Aorta (tissue), 5 donors: ENCODE measurements at regions of chr3 and their contacts with region 1.

Region 1: GRCh38 chr3:124928333-124929202 is 6.0 kb downstream of the MUC13 start:
- DNase-seq: peak in 1 of 2 donors; percentile 76
- ATAC-seq: no peak
- H3K4me3 ChIP-seq: no peak overlapping the region
- H3K27ac ChIP-seq: no peak overlapping the region
- H3K4me1 ChIP-seq: no peaks in the 10 kb centered on the region
- H3K27me3 ChIP-seq: no peaks in the 10 kb centered on the region

Region 2: GRCh38 chr3:124315215-124316033 is 613.1 kb before region 1 on chr3:
- intact Hi-C with region 1: no loop called
- DNase-seq: peak in 1 of 2 donors; percentile 73
- ATAC-seq: peak; percentile 77
- H3K4me3 ChIP-seq: no peak overlapping the region
- H3K27ac ChIP-seq: peak overlapping the region in 1 of 2 donors; percentile 52
- H3K4me1 ChIP-seq: peaks cover 3% of the 10 kb centered on the region in 2 donors
- H3K27me3 ChIP-seq: no peaks in the 10 kb centered on the region

Region 3: GRCh38 chr3:125163739-125164601 is 235.4 kb after region 1 on chr3:
- intact Hi-C with region 1: loop called in 1 of 2 experiments (anchors 5 kb)
- DNase-seq: no peak
- ATAC-seq: peak; percentile 51
- H3K4me3 ChIP-seq: no peak overlapping the region
- H3K27ac ChIP-seq: no peak overlapping the region
- H3K4me1 ChIP-seq: no peaks in the 10 kb centered on the region
- H3K27me3 ChIP-seq: no peaks in the 10 kb centered on the region

Region 4: DNA sequence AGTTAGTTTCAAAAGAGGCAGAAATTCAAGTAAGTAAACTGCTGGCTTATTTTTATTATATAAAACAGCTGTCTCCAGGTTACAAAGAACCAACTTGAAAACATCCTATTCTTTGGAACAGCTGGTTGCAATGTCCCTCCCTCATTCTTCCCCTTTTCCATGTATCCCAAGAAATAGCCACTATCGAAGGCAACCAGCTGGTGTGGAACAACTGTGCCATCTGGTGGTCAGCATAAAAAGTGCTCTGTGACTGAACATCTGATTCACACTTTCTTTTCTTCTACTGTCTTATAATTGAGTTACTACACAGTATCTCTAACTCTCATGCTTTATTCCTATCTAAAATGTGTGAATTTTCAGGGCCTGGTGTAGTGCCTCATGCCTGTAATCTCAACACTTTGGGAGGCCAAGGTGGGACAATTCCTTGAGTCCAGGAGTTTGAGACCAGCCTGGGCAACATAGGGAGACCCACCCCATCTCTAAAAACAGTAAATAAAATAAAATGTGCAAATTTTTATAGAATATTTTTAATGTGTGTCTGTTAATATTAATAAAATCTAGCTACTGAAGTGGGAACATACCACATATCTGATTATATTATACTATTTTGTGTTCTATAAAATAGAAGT is 657.1 kb after region 1 on chr3:
- intact Hi-C with region 1: loop called in 1 of 2 experiments (anchors 10 kb)
- DNase-seq: no peak
- ATAC-seq: peak; percentile 72
- H3K4me3 ChIP-seq: no peak overlapping the region
- H3K27ac ChIP-seq: no peak overlapping the region
- H3K4me1 ChIP-seq: no peaks in the 10 kb centered on the region
- H3K27me3 ChIP-seq: no peaks in the 10 kb centered on the region